Naive thymus-derived CD4-positive, alpha-beta T cell (primary cell): ENCODE measurements at regions of chr1 and their contacts with region 1.

Region 1: DNA sequence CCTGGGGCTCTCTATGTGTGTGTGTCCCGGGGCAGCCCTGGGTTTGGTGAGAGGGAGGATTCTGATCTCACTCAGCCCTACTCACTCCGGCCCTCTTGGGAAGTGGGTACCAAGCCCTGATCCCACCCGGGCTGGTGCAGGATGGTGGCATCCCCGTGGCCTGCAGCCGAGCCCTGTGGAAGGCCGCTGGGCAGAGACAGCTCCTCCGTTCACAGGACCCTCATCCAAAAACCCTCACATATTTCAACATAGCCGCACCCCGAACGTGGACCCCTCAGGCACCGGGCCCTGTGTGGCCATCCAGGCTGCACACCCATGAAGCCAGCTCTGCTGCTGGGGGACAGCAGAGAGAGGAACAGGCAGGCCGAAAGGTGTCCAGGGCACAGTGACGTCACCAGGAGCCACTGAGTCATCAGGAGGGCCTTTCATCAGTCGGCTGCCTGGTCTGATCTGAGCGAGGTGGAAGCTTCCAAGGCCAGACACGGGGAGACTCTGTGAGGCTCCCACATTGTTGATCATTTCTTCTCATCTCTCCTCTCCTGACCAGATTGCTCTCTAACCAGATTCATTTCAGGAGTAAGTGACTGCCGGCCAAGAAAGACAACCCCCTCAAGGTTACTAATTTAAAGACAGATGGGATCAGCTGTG is 16.2 kb upstream of the GPR157 start:
- DNase-seq: no peak
- ATAC-seq: no peak
- H3K4me3 ChIP-seq: no peak overlapping the region
- H3K4me3 Mint-ChIP-seq: no peak overlapping the region
- H3K27ac ChIP-seq: no peak overlapping the region
- H3K27ac Mint-ChIP-seq: no peak overlapping the region
- H3K4me1 ChIP-seq: no peaks in the 10 kb centered on the region
- H3K4me1 Mint-ChIP-seq: peaks cover 0 to 7% (median 4%) of the 10 kb centered on the region in 7 donors
- H3K27me3 ChIP-seq: no peaks in the 10 kb centered on the region
- H3K27me3 Mint-ChIP-seq: no peaks in the 10 kb centered on the region

Region 2: DNA sequence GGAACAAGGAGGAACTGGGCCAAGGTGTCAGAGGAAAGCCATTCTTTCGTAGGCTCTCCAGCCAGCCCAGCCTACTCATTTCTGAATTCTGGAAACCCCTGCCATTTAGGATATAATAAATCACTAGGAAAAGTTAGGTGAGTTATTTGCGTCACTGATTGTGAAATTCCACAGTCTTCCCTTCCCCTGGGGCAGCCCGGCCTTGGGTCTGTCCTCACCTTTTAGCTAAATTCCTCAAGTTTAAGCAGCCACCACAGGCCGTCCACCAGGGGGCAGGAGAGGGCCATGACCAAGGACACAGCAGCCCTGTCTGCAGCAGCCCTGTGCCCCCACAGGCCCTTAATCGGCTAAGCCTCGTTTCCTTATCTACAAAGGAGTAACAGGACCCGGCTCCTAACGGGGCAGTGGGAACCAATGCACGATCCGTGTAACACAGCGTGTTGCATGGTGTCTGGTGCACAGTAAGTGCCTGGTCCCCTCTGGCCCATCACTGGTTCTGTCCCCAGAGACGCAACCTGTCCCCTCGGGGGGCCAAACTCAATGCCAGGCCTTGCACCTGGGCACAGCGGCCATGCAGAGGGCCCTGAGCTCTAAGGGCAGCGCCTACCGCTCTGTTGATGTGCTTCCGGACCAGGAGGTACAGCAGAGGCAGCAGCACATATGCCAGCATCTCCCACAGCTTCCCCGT is 34.3 kb before region 1 on chr1:
- CTCF ChIA-PET with region 1: interaction called, 5 read pairs
- POLR2A ChIA-PET with region 1: no interaction called
- intact Hi-C with region 1: loop called in 1 of 2 experiments (anchors 1 kb)
- DNase-seq: peak; percentile 63 to 88 (median 79)
- ATAC-seq: peak; percentile 94
- H3K4me3 ChIP-seq: no peak overlapping the region
- H3K4me3 Mint-ChIP-seq: no peak overlapping the region
- H3K27ac ChIP-seq: no peak overlapping the region
- H3K27ac Mint-ChIP-seq: no peak overlapping the region
- H3K4me1 ChIP-seq: no peaks in the 10 kb centered on the region
- H3K4me1 Mint-ChIP-seq: peaks cover 0 to 27% (median 6%) of the 10 kb centered on the region in 7 donors
- H3K27me3 ChIP-seq: no peaks in the 10 kb centered on the region
- H3K27me3 Mint-ChIP-seq: no peaks in the 10 kb centered on the region

Region 3: GRCh38 chr1:9196129-9197040 is 51.2 kb after region 1 on chr1:
- CTCF ChIA-PET with region 1: interaction called, 3 read pairs
- POLR2A ChIA-PET with region 1: no interaction called
- intact Hi-C with region 1: loop called (anchors 1 kb)
- DNase-seq: peak in 8 of 9 donors; percentile 33 to 67 (median 50)
- ATAC-seq: peak; percentile 75
- H3K4me3 ChIP-seq: no peak overlapping the region
- H3K4me3 Mint-ChIP-seq: no peak overlapping the region
- H3K27ac ChIP-seq: no peak overlapping the region
- H3K27ac Mint-ChIP-seq: no peak overlapping the region
- H3K4me1 ChIP-seq: peaks cover 0 to 3% of the 10 kb centered on the region in 2 donors
- H3K4me1 Mint-ChIP-seq: peaks cover 11 to 20% (median 19%) of the 10 kb centered on the region in 7 donors
- H3K27me3 ChIP-seq: peaks cover 3 to 10% of the 10 kb centered on the region in 2 donors
- H3K27me3 Mint-ChIP-seq: peaks cover 46 to 74% (median 57%) of the 10 kb centered on the region in 5 donors

Region 4: GRCh38 chr1:9249534-9250410 is 104.6 kb after region 1 on chr1:
- CTCF ChIA-PET with region 1: no interaction called
- POLR2A ChIA-PET with region 1: no interaction called
- intact Hi-C with region 1: loop called in 1 of 2 experiments (anchors 1 kb)
- DNase-seq: peak in 2 of 9 donors; percentile 8 to 20
- ATAC-seq: peak; percentile 46
- H3K4me3 ChIP-seq: no peak overlapping the region
- H3K4me3 Mint-ChIP-seq: no peak overlapping the region
- H3K27ac ChIP-seq: no peak overlapping the region
- H3K27ac Mint-ChIP-seq: no peak overlapping the region
- H3K4me1 ChIP-seq: peaks cover 0 to 1% of the 10 kb centered on the region in 2 donors
- H3K4me1 Mint-ChIP-seq: peaks cover 12 to 33% (median 19%) of the 10 kb centered on the region in 7 donors
- H3K27me3 ChIP-seq: no peaks in the 10 kb centered on the region
- H3K27me3 Mint-ChIP-seq: no peaks in the 10 kb centered on the region

Region 5: GRCh38 chr1:9822897-9823692 is 678.0 kb after region 1 on chr1:
- CTCF ChIA-PET with region 1: no interaction called
- POLR2A ChIA-PET with region 1: no interaction called
- intact Hi-C with region 1: no loop called
- DNase-seq: peak in 6 of 9 donors; percentile 15 to 39 (median 28)
- ATAC-seq: no peak
- H3K4me3 ChIP-seq: peak overlapping the region; percentile 82
- H3K4me3 Mint-ChIP-seq: peak overlapping the region; percentile 95 to 99 (median 98)
- H3K27ac ChIP-seq: peak overlapping the region; percentile 62
- H3K27ac Mint-ChIP-seq: peak overlapping the region; percentile 80 to 97 (median 93)
- H3K4me1 ChIP-seq: peaks cover 24 to 34% of the 10 kb centered on the region in 2 donors
- H3K4me1 Mint-ChIP-seq: peaks cover 31 to 52% (median 49%) of the 10 kb centered on the region in 7 donors
- H3K27me3 ChIP-seq: no peaks in the 10 kb centered on the region
- H3K27me3 Mint-ChIP-seq: peaks cover 0 to 2% (median 0%) of the 10 kb centered on the region in 5 donors